AG04450 (cell line): ENCODE measurements at regions of chr3 and their contacts with region 1.

Region 1: DNA sequence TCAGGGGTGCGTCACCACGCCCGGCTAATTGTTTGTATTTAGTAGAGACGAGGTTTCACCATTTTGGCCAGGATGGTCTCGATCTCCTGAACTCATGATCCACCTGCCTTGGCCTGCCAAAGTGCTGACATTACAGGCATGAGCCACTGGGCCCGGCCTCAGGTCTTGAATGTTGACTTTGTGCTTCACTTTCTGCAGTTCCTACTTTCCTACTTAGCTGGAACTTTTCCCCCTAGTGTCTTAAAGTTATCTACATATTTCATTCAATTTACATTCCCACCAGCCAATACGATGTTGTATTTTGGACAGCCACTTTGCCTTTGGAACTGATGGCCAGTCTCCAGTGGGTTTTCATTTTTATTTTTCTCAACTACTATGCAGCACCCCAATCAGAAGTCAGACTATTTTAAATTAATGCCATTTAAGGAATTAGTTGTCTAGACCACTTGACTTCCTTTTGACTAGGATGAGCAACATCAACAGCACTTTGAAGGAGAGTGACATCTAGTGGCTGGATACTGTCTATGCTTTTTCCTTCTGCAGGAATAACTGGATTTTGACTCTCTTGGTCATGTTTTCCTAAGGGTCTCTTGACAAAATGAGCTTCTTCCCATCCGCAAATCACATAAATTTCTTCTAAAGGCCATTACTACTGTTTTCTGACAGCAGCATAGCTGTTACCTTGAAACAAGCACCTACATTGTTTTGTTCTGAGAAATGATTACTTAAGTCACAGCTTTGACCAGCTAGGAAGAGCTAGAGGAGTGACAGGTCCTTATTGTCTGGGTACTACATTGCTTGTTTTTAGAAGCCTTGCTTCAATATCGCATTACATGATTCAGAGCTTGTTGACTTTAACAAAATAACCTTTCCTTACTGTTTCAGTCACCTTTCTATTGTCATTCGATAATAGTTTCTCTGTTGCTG is 140.2 kb downstream of the ITPR1 start:
- DNase-seq: peak; percentile 20
- H3K4me3 ChIP-seq: no peak overlapping the region
- H3K27ac ChIP-seq: no peak overlapping the region
- H3K27me3 ChIP-seq: peaks cover 2% of the 10 kb centered on the region
- CTCF ChIP-seq: peak; percentile 93

Region 2: GRCh38 chr3:4303187-4304123 is 329.9 kb before region 1 on chr3 and contains the start of gene SETMAR:
- CTCF ChIA-PET with region 1: interaction called, 10 read pairs
- POLR2A ChIA-PET with region 1: no interaction called
- DNase-seq: peak; percentile 50
- H3K4me3 ChIP-seq: peak within 1 kb of the TSS; percentile 84
- H3K27ac ChIP-seq: peak within 1 kb of the TSS; percentile 67
- H3K27me3 ChIP-seq: no peaks in the 10 kb centered on the region
- CTCF ChIP-seq: no peak
- polyA plus RNA-seq, gene SETMAR: 15.5 and 16.8 TPM in 2 replicates

Region 3: DNA sequence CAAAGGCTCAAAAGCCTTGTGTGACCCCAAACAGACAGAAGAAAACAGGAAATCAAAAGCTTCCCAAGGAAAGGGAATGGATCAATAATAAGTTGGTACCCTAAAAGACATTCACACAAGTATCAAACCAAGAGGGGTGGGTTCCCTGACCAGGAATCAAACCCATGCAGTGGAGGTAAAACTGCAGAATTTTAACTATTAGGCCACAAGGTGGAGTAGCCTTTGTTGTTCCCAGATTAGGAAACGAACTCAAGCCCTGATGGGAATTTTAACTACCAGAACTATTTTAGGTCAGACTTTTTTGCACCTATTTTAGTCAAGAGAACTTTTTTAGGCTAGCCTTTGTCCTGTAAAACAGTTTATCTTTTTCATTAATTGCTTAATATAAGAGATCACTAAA is 298.8 kb before region 1 on chr3:
- CTCF ChIA-PET with region 1: interaction called, 336 read pairs
- POLR2A ChIA-PET with region 1: no interaction called
- DNase-seq: no peak
- H3K4me3 ChIP-seq: no peak overlapping the region
- H3K27ac ChIP-seq: no peak overlapping the region
- H3K27me3 ChIP-seq: no peaks in the 10 kb centered on the region
- CTCF ChIP-seq: no peak

Region 4: DNA sequence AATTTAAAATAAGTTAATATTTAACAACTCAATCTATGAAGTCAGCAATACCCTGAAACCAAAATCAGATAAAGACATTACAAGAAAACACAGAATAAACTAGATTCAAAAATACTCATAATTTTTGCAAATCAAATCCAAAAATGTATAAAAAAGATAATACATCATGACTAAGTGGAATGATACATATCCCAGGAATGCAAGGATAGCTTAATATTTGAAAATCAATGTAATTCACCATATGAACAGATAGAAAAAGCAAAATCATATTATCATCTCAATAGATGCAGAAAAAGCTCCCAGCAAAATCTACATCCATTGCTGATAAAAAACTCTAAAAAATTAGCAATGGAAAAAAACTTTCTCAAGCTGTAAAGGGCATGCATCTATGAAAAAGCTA is 259.7 kb before region 1 on chr3:
- CTCF ChIA-PET with region 1: interaction called, 10 read pairs
- POLR2A ChIA-PET with region 1: no interaction called
- DNase-seq: no peak
- H3K4me3 ChIP-seq: no peak overlapping the region
- H3K27ac ChIP-seq: no peak overlapping the region
- H3K27me3 ChIP-seq: no peaks in the 10 kb centered on the region
- CTCF ChIP-seq: no peak

Region 5: GRCh38 chr3:4533489-4534443 is 99.6 kb before region 1 on chr3:
- CTCF ChIA-PET with region 1: interaction called, 10 read pairs
- POLR2A ChIA-PET with region 1: no interaction called
- DNase-seq: no peak
- H3K4me3 ChIP-seq: no peak overlapping the region
- H3K27ac ChIP-seq: no peak overlapping the region
- H3K27me3 ChIP-seq: no peaks in the 10 kb centered on the region
- CTCF ChIP-seq: no peak

Region 6: DNA sequence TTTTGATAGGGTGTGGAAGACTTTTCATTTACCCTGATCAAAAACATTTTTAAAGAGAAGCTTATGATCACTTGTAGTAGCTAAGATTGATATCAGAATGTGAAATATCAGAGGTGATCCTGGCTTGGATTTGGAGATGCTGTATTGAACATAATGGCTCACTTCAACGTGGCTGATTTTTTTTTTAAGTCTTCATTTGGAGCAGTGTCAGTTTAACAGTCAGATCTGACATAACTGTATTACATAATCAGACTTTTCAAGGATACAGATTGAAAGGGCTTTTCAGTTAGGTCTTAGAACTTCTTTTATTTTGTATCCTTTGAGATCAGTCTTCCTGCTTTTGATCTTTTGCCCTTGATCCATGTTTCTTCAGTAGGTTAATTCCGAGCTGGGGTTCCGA is 41.7 kb before region 1 on chr3:
- CTCF ChIA-PET with region 1: interaction called, 10 read pairs
- POLR2A ChIA-PET with region 1: no interaction called
- DNase-seq: no peak
- H3K4me3 ChIP-seq: no peak overlapping the region
- H3K27ac ChIP-seq: no peak overlapping the region
- H3K27me3 ChIP-seq: no peaks in the 10 kb centered on the region
- CTCF ChIP-seq: no peak